ENCODE measurements at regions of chr2 and their contacts with region 1.

Region 1: GRCh38 chr2:223970343-223971128 is 13.3 kb downstream of the MRPL44 start:
- DNase-seq: peak in 1 of 2 donors; percentile 32
- ATAC-seq: peak in 3 of 8 donors; percentile 33 to 52 (median 43)
- H3K4me3 ChIP-seq: no peak overlapping the region
- H3K27ac ChIP-seq: no peak overlapping the region
- H3K4me1 ChIP-seq: peaks cover 0 to 5% (median 0%) of the 10 kb centered on the region in 9 donors
- H3K27me3 ChIP-seq: no peaks in the 10 kb centered on the region
- CTCF ChIP-seq: peak; percentile 87 to 96 (median 93)

Region 2: GRCh38 chr2:223416815-223417610 is 553.5 kb before region 1 on chr2:
- intact Hi-C with region 1: no loop called
- DNase-seq: peak in 1 of 2 donors; percentile 6
- ATAC-seq: peak in 3 of 8 donors; percentile 19 to 53 (median 46)
- H3K4me3 ChIP-seq: no peak overlapping the region
- H3K27ac ChIP-seq: no peak overlapping the region
- H3K4me1 ChIP-seq: no peaks in the 10 kb centered on the region
- H3K27me3 ChIP-seq: no peaks in the 10 kb centered on the region
- CTCF ChIP-seq: no peak

Region 3: DNA sequence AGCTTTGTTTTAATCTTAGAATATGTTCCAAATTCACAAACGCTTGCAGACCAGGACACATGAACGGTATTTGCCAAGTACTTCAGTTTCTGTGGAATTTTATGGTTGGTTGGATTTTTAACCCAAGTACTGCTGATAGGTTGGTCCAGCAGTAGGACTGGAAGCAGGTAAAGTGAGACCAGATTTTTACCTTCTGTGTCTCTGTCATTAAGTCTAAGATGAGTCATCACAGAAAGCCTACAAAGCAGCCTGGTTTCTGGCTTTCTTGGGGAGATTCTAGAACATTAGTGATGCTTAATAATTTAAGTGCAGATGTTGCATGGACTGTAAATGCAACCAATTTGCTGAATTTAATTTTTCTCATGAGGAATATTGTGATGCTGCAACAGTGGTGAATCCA is 468.9 kb before region 1 on chr2:
- intact Hi-C with region 1: no loop called
- DNase-seq: no peak
- ATAC-seq: no peak
- H3K4me3 ChIP-seq: no peak overlapping the region
- H3K27ac ChIP-seq: no peak overlapping the region
- H3K4me1 ChIP-seq: no peaks in the 10 kb centered on the region
- H3K27me3 ChIP-seq: no peaks in the 10 kb centered on the region
- CTCF ChIP-seq: no peak

Region 4: GRCh38 chr2:223993621-223994232 is 23.2 kb after region 1 on chr2:
- intact Hi-C with region 1: loop called in 1 of 10 experiments (anchors 2 kb)
- DNase-seq: peak in 1 of 2 donors; percentile 64
- ATAC-seq: peak; percentile 17 to 84 (median 78)
- H3K4me3 ChIP-seq: no peak overlapping the region
- H3K27ac ChIP-seq: peak overlapping the region in 1 of 10 donors; percentile 15
- H3K4me1 ChIP-seq: peaks cover 0 to 5% (median 0%) of the 10 kb centered on the region in 9 donors
- H3K27me3 ChIP-seq: no peaks in the 10 kb centered on the region
- CTCF ChIP-seq: peak; percentile 69 to 89 (median 80)

Region 5: DNA sequence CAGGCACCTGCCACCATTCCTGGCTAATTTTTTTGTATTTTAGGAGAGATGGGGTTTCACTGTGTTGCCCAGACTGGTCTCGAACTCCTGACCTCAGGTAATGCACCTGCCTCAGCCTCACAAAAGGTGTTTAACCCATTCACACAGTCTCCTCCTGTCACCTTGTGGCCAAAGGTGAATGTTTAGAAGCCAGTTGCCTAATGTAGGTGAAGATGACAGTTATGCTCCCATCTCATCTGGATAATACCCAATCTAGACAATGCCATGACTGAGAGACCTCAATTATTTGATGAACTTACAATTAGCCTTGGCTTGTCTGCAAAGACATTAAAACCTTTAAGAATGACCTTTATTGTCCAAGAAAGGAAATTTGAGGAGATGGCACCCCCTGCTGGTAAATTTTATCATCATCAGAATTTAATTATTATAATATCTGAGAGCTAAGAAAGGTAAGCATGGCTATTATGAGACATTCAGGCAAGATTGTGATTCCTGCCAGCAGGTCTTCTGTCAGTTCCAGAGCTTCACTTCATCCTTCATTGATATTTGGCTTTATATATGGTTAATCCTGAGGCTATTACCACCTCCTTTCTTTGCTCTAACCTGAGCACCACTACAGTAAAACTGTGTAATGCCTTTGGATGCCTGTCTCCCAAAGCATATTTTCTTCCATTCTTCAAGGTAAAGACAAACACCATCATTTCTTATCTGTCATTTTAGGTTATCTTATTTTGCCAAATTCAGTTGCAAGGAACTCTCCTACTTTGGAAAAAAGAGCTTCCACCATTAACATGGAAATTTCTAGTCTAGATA is 313.8 kb after region 1 on chr2:
- intact Hi-C with region 1: loop called in 9 of 10 experiments (anchors 1 to 5 kb)
- DNase-seq: peak in 1 of 2 donors; percentile 19
- ATAC-seq: peak in 7 of 8 donors; percentile 37 to 53 (median 42)
- H3K4me3 ChIP-seq: no peak overlapping the region
- H3K27ac ChIP-seq: no peak overlapping the region
- H3K4me1 ChIP-seq: peaks cover 0 to 12% (median 0%) of the 10 kb centered on the region in 9 donors
- H3K27me3 ChIP-seq: peaks cover 0 to 41% (median 7%) of the 10 kb centered on the region in 7 donors
- CTCF ChIP-seq: peak; percentile 38 to 82 (median 64)

Region 6: DNA sequence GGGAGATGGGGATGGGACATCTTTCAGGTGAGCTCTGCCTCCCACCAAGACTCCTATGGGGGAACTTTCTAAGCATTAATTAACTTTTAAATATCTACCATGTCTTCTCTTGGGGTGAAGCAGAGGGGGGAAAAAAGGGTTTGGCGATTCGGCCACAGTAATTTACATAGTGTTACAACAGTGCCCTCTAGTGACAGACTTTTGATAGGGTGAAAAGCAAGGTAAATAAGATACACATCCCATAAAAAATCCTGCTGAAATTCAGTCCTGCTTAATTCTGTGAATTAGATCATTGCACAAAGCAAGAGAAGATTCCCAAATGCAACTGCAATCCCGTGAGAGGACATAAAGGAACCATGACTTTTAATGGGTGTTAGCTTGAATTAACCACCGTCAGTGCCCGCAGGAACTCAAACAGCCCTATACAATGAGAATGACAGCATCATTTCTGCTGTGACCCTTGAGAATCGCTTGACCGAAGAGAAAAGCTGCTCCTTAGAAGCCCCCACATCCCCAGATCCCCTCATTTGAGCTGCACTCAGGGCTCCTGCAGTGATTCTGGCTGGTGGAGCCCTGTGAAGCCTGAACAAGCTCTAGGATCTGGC is 398.6 kb after region 1 on chr2:
- intact Hi-C with region 1: loop called in 2 of 10 experiments (anchors 10 kb)
- DNase-seq: no peak
- ATAC-seq: no peak
- H3K4me3 ChIP-seq: no peak overlapping the region
- H3K27ac ChIP-seq: no peak overlapping the region
- H3K4me1 ChIP-seq: peaks cover 0 to 5% (median 0%) of the 10 kb centered on the region in 9 donors
- H3K27me3 ChIP-seq: no peaks in the 10 kb centered on the region
- CTCF ChIP-seq: peak; percentile 35 to 79 (median 68)

Region 7: GRCh38 chr2:224638301-224638823 is 667.8 kb after region 1 on chr2:
- intact Hi-C with region 1: loop called in 1 of 10 experiments (anchors 10 kb)
- DNase-seq: no peak
- ATAC-seq: no peak
- H3K4me3 ChIP-seq: no peak overlapping the region
- H3K27ac ChIP-seq: no peak overlapping the region
- H3K4me1 ChIP-seq: no peaks in the 10 kb centered on the region
- H3K27me3 ChIP-seq: peaks cover 0 to 8% (median under 1%) of the 10 kb centered on the region in 7 donors
- CTCF ChIP-seq: no peak

Region 8: DNA sequence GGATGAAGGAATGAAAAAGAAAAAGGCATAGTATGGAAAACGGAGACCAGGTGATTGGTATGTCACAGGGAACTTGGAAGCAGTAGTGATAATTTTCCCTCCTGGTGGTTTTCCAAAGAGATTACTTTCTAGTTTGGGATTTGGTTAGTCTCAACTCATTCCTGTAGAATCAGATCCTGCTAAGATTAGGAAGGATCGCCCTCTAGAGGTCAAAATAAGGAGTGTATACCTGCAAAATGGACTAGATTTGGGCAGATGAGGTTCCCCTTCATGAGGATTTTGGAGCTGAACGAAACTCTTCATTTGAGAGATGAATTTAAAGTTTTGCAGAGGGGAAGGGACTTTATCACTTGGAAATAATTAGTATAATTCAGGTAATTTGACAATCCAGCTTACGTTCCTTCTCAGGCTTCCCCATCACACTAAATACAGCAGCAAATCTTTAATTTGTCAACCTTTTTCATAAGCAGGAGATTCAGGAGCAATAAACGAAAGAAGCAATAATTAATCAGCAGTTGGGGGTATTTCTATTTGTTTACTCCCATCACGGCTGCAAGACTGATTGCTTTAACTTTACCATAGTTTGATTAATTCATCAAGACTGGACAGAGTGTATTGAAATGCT is 680.4 kb after region 1 on chr2:
- intact Hi-C with region 1: loop called in 1 of 10 experiments (anchors 5 kb)
- DNase-seq: peak in 1 of 2 donors; percentile 10
- ATAC-seq: peak in 6 of 8 donors; percentile 50 to 70 (median 60)
- H3K4me3 ChIP-seq: no peak overlapping the region
- H3K27ac ChIP-seq: no peak overlapping the region
- H3K4me1 ChIP-seq: no peaks in the 10 kb centered on the region
- H3K27me3 ChIP-seq: peaks cover 0 to 5% (median 0%) of the 10 kb centered on the region in 7 donors
- CTCF ChIP-seq: peak; percentile 52 to 88 (median 81)

Measured in heart right ventricle (tissue), 16 donors.